Activated naive CD4-positive, alpha-beta T cell treated with anti-CD3 and anti-CD28 coated beads, Interleukin-2, amount 10 ng/mL, durations not matched to agents 7 days and 5 days (primary cell): ENCODE measurements at regions of chr16 and their contacts with region 1.

Region 1: DNA sequence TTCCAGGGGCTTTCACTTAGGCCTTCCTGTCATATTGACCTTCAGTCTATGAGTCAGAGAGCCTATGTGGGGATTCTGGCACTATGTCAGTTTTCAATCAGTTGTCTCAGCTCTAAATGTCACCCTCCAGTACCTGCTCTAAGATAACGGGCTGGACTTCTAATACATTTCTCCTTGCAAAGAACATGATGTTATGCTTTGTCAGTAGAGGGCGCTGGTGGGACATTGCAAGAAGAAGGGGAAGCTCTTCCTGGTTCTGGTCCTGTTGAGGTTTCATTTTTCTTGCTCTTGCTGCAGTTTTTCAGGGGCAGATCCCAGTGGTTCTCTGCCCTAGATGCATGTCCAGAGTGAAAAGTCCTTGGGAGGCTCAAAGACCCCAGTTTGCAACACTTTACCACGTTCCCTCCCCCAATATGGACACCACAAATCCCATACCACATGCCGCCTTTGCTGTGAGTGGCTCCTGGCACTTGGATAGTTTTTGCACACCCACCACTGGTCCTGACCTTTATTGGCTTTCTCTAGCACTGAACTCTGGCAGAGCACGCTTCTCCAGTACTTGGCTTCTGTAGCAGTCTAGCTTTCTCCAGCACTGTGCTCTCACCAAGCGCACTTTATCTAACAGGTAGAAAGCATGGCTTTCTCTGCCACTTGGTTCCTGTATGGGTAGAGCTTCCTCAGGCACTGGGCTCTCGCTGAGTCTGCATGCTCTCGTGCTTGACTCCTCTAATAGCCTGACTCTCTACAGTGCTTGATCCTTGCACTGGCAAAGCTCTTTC is 49.0 kb downstream of the BCL7C start:
- DNase-seq: peak; percentile 89
- H3K4me3 Mint-ChIP-seq: peak overlapping the region; percentile 4
- H3K27ac Mint-ChIP-seq: peak overlapping the region; percentile 20
- H3K4me1 Mint-ChIP-seq: peaks cover 12% of the 10 kb centered on the region
- H3K27me3 Mint-ChIP-seq: peaks cover 18% of the 10 kb centered on the region

Region 2: DNA sequence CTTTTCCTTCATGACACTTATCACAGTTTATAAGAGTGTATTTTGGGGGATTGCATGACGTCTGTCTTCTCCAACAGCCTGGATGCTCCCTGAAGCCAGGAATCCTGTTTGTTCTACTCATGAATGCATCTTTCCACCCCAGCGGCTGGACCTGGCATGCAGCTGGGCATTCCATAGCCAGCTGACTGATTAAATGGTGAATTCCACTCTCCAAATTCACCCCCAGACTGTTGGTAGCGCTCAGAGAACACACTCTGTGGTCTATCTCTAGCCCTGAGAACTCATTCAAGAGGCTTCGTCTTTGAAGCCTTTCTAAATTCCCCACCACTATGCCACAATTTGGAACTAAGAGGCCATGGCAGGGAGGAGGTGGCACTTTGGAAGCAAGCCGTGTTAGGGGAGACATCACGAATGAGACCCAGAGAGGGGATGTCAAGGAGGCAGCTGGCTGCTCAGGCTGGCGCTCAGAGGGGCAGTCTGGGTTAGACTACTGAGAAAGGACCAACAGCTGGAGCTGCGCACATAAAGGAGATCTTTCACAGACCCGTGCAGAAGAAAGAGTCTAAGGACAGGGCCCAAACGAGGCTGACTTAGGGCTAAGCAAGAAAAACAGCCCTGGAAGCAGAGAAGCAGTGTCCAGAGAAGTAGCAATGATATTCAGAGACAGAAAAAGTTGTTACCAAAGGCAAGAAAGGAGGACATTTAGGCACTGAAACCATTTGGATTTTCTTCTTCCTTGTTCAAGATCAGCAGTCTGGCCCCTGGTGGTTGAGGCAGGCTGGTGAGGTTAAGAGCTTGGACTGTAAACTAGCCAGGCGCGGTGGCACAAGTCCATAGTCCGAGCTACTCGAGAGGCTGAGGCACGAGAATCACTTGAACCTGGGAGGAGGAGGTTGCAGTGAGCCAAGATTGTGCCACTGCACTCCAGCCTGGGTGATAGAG is 15.5 kb before region 1 on chr16:
- CTCF ChIA-PET with region 1: no interaction called
- DNase-seq: no peak
- H3K4me3 Mint-ChIP-seq: no peak overlapping the region
- H3K27ac Mint-ChIP-seq: no peak overlapping the region
- H3K4me1 Mint-ChIP-seq: no peaks in the 10 kb centered on the region
- H3K27me3 Mint-ChIP-seq: peaks cover 20% of the 10 kb centered on the region

Region 3: GRCh38 chr16:30867747-30868146 is 22.9 kb after region 1 on chr16:
- CTCF ChIA-PET with region 1: interaction called, 19 read pairs
- DNase-seq: no peak
- H3K4me3 Mint-ChIP-seq: no peak overlapping the region
- H3K27ac Mint-ChIP-seq: no peak overlapping the region
- H3K4me1 Mint-ChIP-seq: peaks cover under 1% of the 10 kb centered on the region
- H3K27me3 Mint-ChIP-seq: no peaks in the 10 kb centered on the region

Region 4: DNA sequence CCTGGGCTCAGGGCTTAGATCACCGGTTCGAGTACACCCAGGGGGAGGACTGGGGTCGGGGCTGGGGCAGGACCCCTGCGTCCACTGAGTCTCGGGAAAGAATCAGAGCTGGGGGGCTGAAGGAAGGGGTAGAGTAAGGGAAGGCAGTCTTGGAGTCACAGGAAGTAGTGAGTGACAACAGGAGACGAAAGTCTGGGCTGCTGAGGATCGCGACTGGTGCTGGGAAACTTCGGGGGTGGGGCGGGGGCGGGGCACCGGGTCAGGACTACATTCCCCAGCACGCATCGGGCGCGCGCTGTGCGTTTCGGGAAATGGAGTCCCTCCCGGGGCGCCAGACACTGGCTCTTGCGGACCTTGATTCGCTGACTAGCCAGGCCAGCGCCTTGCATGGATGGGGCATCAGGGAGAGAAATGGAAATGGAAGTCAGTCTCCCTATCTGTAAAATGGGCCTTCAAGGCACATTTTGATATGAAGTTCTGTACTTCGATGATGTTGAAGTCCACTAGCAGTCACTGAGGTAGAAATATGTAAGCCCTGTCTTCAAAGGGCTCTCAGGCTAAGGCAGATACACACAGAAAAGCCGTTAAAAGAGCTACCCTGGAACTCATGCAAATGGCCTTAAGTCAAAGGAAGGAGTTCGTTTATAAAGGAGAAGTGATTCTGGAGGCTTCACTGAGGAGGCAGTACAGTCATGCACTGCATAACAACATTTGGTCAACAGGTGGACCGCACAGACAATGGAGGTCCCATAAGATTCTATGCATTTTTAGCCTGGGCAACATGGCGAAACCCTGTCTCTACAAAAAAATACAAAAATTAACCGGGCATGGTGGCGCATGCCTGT is 52.3 kb after region 1 on chr16:
- CTCF ChIA-PET with region 1: interaction called, 88 read pairs
- DNase-seq: peak; percentile 85
- H3K4me3 Mint-ChIP-seq: peak overlapping the region; percentile 51
- H3K27ac Mint-ChIP-seq: peak overlapping the region; percentile 67
- H3K4me1 Mint-ChIP-seq: peaks cover 68% of the 10 kb centered on the region
- H3K27me3 Mint-ChIP-seq: no peaks in the 10 kb centered on the region

Region 5: GRCh38 chr16:30921748-30922419 is 77.0 kb after region 1 on chr16:
- CTCF ChIA-PET with region 1: interaction called, 71 read pairs
- DNase-seq: peak; percentile 93
- H3K4me3 Mint-ChIP-seq: peak overlapping the region; percentile 100
- H3K27ac Mint-ChIP-seq: peak overlapping the region; percentile 100
- H3K4me1 Mint-ChIP-seq: peaks cover 32% of the 10 kb centered on the region
- H3K27me3 Mint-ChIP-seq: peaks cover 13% of the 10 kb centered on the region

Region 6: GRCh38 chr16:30941600-30942425 is 97.0 kb after region 1 on chr16:
- CTCF ChIA-PET with region 1: interaction called, 55 read pairs
- DNase-seq: peak; percentile 81
- H3K4me3 Mint-ChIP-seq: peak overlapping the region; percentile 54
- H3K27ac Mint-ChIP-seq: peak overlapping the region; percentile 73
- H3K4me1 Mint-ChIP-seq: peaks cover 27% of the 10 kb centered on the region
- H3K27me3 Mint-ChIP-seq: no peaks in the 10 kb centered on the region